ENCODE measurements at regions of chr1 and their contacts with region 1.

Region 1: DNA sequence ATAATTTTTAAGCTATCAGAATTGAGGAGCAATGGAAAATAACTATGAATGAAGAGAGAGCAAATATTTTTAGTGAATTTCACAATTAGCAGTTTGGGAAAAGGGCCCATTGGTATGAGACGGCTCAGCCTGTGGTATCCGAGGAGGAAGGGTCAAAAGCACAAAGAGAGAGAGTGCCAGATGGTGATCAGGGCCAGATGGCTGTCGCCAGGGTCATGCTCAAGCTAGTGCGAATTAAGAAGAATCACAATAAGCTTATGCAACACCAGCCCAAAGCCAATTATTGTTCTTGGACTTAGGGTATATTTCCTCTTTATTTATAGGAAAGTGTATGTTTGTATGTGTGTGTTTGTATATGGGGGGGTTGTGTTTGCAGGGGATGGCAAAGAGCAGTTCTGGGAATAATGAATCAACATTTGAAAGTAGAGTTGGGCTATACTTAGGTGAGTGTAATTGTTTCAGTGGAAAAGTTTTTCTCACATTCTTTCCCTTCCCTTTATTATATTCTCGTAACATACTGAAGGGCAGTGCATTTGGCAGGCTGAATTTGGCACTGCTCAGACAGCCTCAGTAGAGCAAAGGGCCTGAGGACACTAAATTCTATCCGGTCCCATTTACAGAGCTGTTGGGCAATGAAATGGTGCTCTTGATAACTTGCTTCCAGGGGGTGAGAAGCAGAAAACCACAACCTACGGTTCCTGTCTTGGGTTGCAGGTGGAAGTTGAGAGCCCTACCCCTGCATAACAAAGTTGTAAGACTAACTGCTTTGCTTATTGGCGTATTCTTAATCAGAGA is 19.5 kb upstream of the DDR2 start:
- DNase-seq: no peak
- H3K4me3 ChIP-seq: no peak overlapping the region
- CTCF ChIP-seq: no peak

Region 2: DNA sequence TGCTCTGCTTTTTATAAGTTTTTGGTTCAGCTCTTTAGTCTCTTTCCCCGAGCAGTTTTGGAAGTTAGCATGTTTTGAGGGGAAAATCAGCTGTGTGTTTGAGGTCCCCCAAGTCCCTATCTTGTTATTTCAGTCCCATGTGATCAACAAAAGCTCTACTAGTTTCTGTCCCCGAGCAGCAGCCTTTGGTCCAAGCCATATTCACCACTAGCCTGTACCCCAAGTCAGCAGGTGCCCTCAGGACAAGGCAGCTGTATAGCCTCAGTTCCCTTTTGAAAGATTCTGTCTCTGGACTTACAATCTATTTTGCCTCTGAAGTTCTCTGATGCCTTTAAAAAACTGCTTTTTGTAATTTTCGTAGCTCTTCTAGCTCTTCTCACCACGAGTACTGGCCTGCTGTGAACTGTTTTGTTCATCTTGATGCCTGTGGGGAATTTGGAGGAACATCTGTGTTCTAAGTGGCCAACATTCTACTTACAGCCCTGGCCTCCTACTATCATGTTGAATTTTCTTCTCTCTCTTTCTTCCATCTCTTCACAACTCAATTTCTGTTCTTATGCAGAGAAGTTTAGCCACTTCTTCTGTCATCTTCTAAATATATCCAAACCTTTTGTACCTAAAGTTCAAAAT is 34.6 kb before region 1 on chr1:
- CTCF ChIA-PET with region 1: interaction called, 10 read pairs
- POLR2A ChIA-PET with region 1: no interaction called
- DNase-seq: no peak
- H3K4me3 ChIP-seq: no peak overlapping the region
- CTCF ChIP-seq: no peak

Region 3: GRCh38 chr1:162596514-162597170 is 16.2 kb before region 1 on chr1:
- CTCF ChIA-PET with region 1: interaction called, 82 read pairs
- POLR2A ChIA-PET with region 1: no interaction called
- DNase-seq: no peak
- H3K4me3 ChIP-seq: no peak overlapping the region
- CTCF ChIP-seq: no peak

Region 4: GRCh38 chr1:162696286-162696862 is 83.6 kb after region 1 on chr1:
- CTCF ChIA-PET with region 1: interaction called, 20 read pairs
- POLR2A ChIA-PET with region 1: no interaction called
- DNase-seq: peak; percentile 59
- H3K4me3 ChIP-seq: peak overlapping the region; percentile 15; the same call in 1 of the 2 replicates
- CTCF ChIP-seq: no peak

Region 5: GRCh38 chr1:162774007-162774406 is 161.2 kb after region 1 on chr1:
- CTCF ChIA-PET with region 1: interaction called, 11 read pairs
- POLR2A ChIA-PET with region 1: no interaction called
- DNase-seq: no peak
- H3K4me3 ChIP-seq: no peak overlapping the region
- CTCF ChIP-seq: no peak

Measured in AG04449 (cell line).